Prostate gland (tissue), 2 donors: ENCODE measurements at regions of chr14 and their contacts with region 1.

Region 1: GRCh38 chr14:52313903-52314594 is at the start of gene PTGER2:
- DNase-seq: peak; percentile 60
- H3K4me3 ChIP-seq: peak within 1 kb of the TSS; percentile 47 to 50
- H3K27ac ChIP-seq: peak within 1 kb of the TSS; percentile 70
- H3K4me1 ChIP-seq: no peaks in the 10 kb centered on the region
- H3K27me3 ChIP-seq: no peaks in the 10 kb centered on the region
- CTCF ChIP-seq: no peak
- POLR2A ChIP-seq: peak; percentile 46
- total RNA-seq, gene PTGER2: 5.4 to 8.9 TPM

Region 2: GRCh38 chr14:52351233-52352060 is 37.4 kb after region 1 on chr14:
- intact Hi-C with region 1: loop called (anchors 2 kb)
- DNase-seq: no peak
- H3K4me3 ChIP-seq: no peak overlapping the region
- H3K27ac ChIP-seq: peak overlapping the region; percentile 37 to 40
- H3K4me1 ChIP-seq: no peaks in the 10 kb centered on the region
- H3K27me3 ChIP-seq: no peaks in the 10 kb centered on the region
- CTCF ChIP-seq: no peak
- POLR2A ChIP-seq: no peak

Region 3: DNA sequence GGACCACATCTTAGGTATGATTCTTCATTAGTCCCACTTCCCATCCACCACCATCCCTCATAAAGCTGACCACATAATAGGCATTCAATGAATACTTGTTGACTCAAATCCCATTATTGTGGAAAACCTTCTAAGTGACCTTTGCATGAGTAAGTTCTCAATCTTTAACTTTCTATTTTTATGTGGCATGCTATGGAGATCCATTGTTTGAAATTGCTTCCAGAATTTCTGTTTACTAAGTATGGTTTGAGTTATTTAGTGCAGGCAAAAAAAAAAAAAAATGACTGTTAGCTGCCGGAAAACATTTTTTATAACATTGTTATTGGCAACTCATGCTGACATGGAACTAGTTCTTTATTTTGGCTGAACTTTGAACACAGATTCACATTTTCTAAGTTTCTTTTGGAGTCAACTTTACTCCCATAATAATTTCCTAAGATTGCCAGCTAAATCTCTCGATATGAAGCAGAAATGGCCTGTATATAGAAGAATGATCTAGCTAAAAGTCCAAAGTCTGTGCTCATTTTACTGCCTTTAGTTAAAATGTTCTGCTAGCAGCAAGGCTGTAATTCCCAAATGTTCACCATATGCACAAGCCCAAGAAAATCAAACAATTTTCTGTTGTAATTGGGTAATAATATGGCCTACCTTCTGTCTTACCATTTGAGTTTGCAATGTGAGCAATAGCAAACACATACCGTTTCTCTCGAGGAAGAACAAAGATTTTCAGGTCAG is 78.0 kb after region 1 on chr14:
- intact Hi-C with region 1: no loop called
- DNase-seq: no peak
- H3K4me3 ChIP-seq: no peak overlapping the region
- H3K27ac ChIP-seq: no peak overlapping the region
- H3K4me1 ChIP-seq: no peaks in the 10 kb centered on the region
- H3K27me3 ChIP-seq: no peaks in the 10 kb centered on the region
- CTCF ChIP-seq: no peak
- POLR2A ChIP-seq: no peak

Region 4: GRCh38 chr14:52402812-52403526 is 88.9 kb after region 1 on chr14:
- intact Hi-C with region 1: loop called (anchors 10 kb)
- DNase-seq: no peak
- H3K4me3 ChIP-seq: no peak overlapping the region
- H3K27ac ChIP-seq: no peak overlapping the region
- H3K4me1 ChIP-seq: no peaks in the 10 kb centered on the region
- H3K27me3 ChIP-seq: no peaks in the 10 kb centered on the region
- CTCF ChIP-seq: no peak
- POLR2A ChIP-seq: no peak

Region 5: GRCh38 chr14:52552063-52552988 is 238.3 kb after region 1 on chr14 and contains the starts of genes GPR137C and TXNDC16:
- intact Hi-C with region 1: loop called (anchors 5 kb)
- DNase-seq: peak; percentile 100
- H3K4me3 ChIP-seq: peak within 1 kb of the TSS; percentile 61 to 80
- H3K27ac ChIP-seq: peak within 1 kb of the TSS; percentile 95 to 96
- H3K4me1 ChIP-seq: no peaks in the 10 kb centered on the region
- H3K27me3 ChIP-seq: no peaks in the 10 kb centered on the region
- CTCF ChIP-seq: peak in 1 of 4 experiments; percentile 46
- POLR2A ChIP-seq: peak; percentile 99
- total RNA-seq, gene GPR137C: 0.09 to 5.3 TPM
- total RNA-seq, gene TXNDC16: 14.0 to 37.1 TPM